H1 (cell line): ENCODE measurements at regions of chr3 and their contacts with region 1.

Region 1: GRCh38 chr3:133927540-133928066 is 31.9 kb upstream of the RAB6B start:
- DNase-seq: peak in 1 of 2 experiments; percentile 87
- H3K4me3 ChIP-seq: peak overlapping the region; percentile 34 to 72 (median 56)
- H3K27ac ChIP-seq: no peak overlapping the region
- H3K4me1 ChIP-seq: peaks cover 0 to 9% (median 4%) of the 10 kb centered on the region in 4 experiments; a peak in 5 of 7 replicates
- H3K27me3 ChIP-seq: peaks cover 0 to 21% (median 16%) of the 10 kb centered on the region in 4 experiments; a peak in 5 of 7 replicates
- CTCF ChIP-seq: peak; percentile 58 to 77 (median 74)
- EP300 ChIP-seq: no peak
- POLR2A ChIP-seq: no peak
- RAD21 ChIP-seq: peak; percentile 35 to 67; a peak in 3 of 4 replicates

Region 2: GRCh38 chr3:133821767-133822638 is 105.6 kb before region 1 on chr3:
- CTCF ChIA-PET with region 1: interaction called, 15 read pairs
- POLR2A ChIA-PET with region 1: no interaction called
- DNase-seq: peak in 1 of 2 experiments; percentile 38
- H3K4me3 ChIP-seq: no peak overlapping the region
- H3K27ac ChIP-seq: no peak overlapping the region; the same call in 1 of the 2 replicates
- H3K4me1 ChIP-seq: peaks cover 4 to 15% (median 7%) of the 10 kb centered on the region in 4 experiments; a peak in 5 of 7 replicates
- H3K27me3 ChIP-seq: no peaks in the 10 kb centered on the region
- CTCF ChIP-seq: peak in 2 of 3 experiments; percentile 35 to 58; a peak in 2 of 4 replicates
- EP300 ChIP-seq: no peak
- POLR2A ChIP-seq: no peak
- RAD21 ChIP-seq: peak; percentile 32 to 49; a peak in 3 of 4 replicates

Region 3: GRCh38 chr3:133944641-133945380 is 17.2 kb after region 1 on chr3:
- CTCF ChIA-PET with region 1: interaction called, 38 read pairs
- POLR2A ChIA-PET with region 1: no interaction called
- DNase-seq: no peak
- H3K4me3 ChIP-seq: no peak overlapping the region
- H3K27ac ChIP-seq: no peak overlapping the region
- H3K4me1 ChIP-seq: peaks cover 0 to 13% (median 7%) of the 10 kb centered on the region in 4 experiments; a peak in 5 of 7 replicates
- H3K27me3 ChIP-seq: no peaks in the 10 kb centered on the region
- CTCF ChIP-seq: no peak
- EP300 ChIP-seq: no peak
- POLR2A ChIP-seq: no peak
- RAD21 ChIP-seq: no peak

Region 4: GRCh38 chr3:133964547-133964946 is 36.9 kb after region 1 on chr3:
- CTCF ChIA-PET with region 1: interaction called, 24 read pairs
- POLR2A ChIA-PET with region 1: no interaction called
- DNase-seq: no peak
- H3K4me3 ChIP-seq: no peak overlapping the region
- H3K27ac ChIP-seq: no peak overlapping the region
- H3K4me1 ChIP-seq: no peaks in the 10 kb centered on the region
- H3K27me3 ChIP-seq: no peaks in the 10 kb centered on the region
- CTCF ChIP-seq: peak; percentile 45 to 61 (median 46); a peak in 3 of 4 replicates
- EP300 ChIP-seq: no peak
- POLR2A ChIP-seq: no peak
- RAD21 ChIP-seq: peak; percentile 50 to 67

Region 5: GRCh38 chr3:134145177-134145576 is 217.6 kb after region 1 on chr3:
- CTCF ChIA-PET with region 1: interaction called, 16 read pairs
- POLR2A ChIA-PET with region 1: no interaction called
- DNase-seq: no peak
- H3K4me3 ChIP-seq: no peak overlapping the region
- H3K27ac ChIP-seq: no peak overlapping the region
- H3K4me1 ChIP-seq: no peaks in the 10 kb centered on the region
- H3K27me3 ChIP-seq: no peaks in the 10 kb centered on the region
- CTCF ChIP-seq: peak; percentile 33 to 42 (median 41); a peak in 3 of 4 replicates
- EP300 ChIP-seq: no peak
- POLR2A ChIP-seq: no peak
- RAD21 ChIP-seq: peak in 1 of 2 experiments; percentile 40; a peak in 1 of 4 replicates